Upper lobe of right lung (tissue), 1 donor: ENCODE measurements at regions of chr5 and their contacts with region 1.

Region 1: GRCh38 chr5:112757468-112758208 is 20.0 kb downstream of the APC start:
- DNase-seq: no peak
- ATAC-seq: peak; percentile 84
- H3K4me3 ChIP-seq: no peak overlapping the region
- H3K27ac ChIP-seq: no peak overlapping the region
- H3K4me1 ChIP-seq: no peaks in the 10 kb centered on the region
- H3K27me3 ChIP-seq: no peaks in the 10 kb centered on the region
- CTCF ChIP-seq: peak; percentile 86

Region 2: GRCh38 chr5:112551419-112552032 is 206.1 kb before region 1 on chr5:
- intact Hi-C with region 1: loop called (anchors 5 kb)
- DNase-seq: no peak
- ATAC-seq: peak; percentile 81
- H3K4me3 ChIP-seq: no peak overlapping the region
- H3K27ac ChIP-seq: no peak overlapping the region
- H3K4me1 ChIP-seq: no peaks in the 10 kb centered on the region
- H3K27me3 ChIP-seq: no peaks in the 10 kb centered on the region
- CTCF ChIP-seq: peak; percentile 84

Region 3: DNA sequence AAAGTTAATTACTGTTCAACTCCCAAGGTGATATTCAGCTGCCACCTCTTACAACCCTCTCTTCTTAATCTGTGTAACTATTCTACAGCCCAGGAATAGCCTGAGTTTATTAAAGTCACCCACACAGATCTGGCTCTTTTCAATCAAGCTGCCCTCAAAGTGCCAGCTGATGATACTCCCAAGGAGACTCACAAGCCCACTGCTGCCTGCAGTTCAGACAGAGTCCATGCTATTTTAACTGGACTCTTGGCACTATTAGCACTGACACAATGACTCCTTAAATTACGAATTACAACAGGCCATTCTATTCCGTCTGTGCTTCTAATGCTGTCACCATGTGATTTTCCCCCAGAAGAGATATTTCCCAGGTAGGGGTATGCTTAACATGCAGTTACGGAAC is 138.0 kb after region 1 on chr5:
- intact Hi-C with region 1: no loop called
- DNase-seq: no peak
- ATAC-seq: no peak
- H3K4me3 ChIP-seq: no peak overlapping the region
- H3K27ac ChIP-seq: no peak overlapping the region
- H3K4me1 ChIP-seq: no peaks in the 10 kb centered on the region
- H3K27me3 ChIP-seq: no peaks in the 10 kb centered on the region
- CTCF ChIP-seq: no peak

Region 4: DNA sequence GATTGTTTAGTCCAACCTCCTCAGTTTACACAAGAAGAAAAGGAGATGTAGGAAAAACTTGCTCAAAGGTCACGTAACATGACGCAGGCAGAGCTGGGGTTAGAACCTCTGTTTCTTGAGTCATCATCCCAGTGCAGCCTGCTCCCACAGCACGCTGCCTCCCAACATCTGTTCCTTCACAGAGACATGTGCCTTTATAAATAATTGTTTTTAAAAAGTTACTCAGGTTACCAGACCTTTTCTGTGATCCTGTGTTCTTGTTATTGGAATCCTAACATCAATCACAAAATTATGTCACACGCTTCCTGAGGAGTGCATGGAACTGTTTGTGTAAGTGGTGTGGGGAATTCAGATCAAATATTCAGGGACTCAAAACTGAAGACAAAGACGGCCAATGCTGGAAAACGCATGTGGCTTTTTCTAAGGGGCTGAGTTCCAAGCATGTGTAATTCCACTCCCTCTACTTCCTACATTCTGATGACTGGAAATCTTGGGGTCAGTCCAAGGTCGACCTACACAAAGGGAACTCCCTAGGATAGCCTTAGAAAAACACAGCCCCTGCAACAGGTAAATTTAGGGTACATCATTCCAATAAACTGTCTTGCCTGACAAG is 492.8 kb after region 1 on chr5:
- intact Hi-C with region 1: no loop called
- DNase-seq: no peak
- ATAC-seq: peak; percentile 43
- H3K4me3 ChIP-seq: no peak overlapping the region
- H3K27ac ChIP-seq: peak overlapping the region; percentile 20
- H3K4me1 ChIP-seq: peaks cover 20% of the 10 kb centered on the region
- H3K27me3 ChIP-seq: no peaks in the 10 kb centered on the region
- CTCF ChIP-seq: no peak